Activated naive CD4-positive, alpha-beta T cell treated with anti-CD3 and anti-CD28 coated beads for 36 hours (primary cell): ENCODE measurements at regions of chr10 and their contacts with region 1.

Region 1: GRCh38 chr10:24866604-24867583 is 85.5 kb downstream of the PRTFDC1 start:
- DNase-seq: no peak
- H3K4me3 Mint-ChIP-seq: no peak overlapping the region
- H3K27ac Mint-ChIP-seq: no peak overlapping the region
- H3K4me1 Mint-ChIP-seq: peaks cover 30% of the 10 kb centered on the region
- H3K27me3 Mint-ChIP-seq: no peaks in the 10 kb centered on the region

Region 2: GRCh38 chr10:24706479-24707118 is 160.3 kb before region 1 on chr10:
- CTCF ChIA-PET with region 1: no interaction called
- intact Hi-C with region 1: loop called (anchors 5 kb)
- DNase-seq: peak; percentile 58
- H3K4me3 Mint-ChIP-seq: no peak overlapping the region
- H3K27ac Mint-ChIP-seq: no peak overlapping the region
- H3K4me1 Mint-ChIP-seq: peaks cover 5% of the 10 kb centered on the region
- H3K27me3 Mint-ChIP-seq: peaks cover 2% of the 10 kb centered on the region

Region 3: DNA sequence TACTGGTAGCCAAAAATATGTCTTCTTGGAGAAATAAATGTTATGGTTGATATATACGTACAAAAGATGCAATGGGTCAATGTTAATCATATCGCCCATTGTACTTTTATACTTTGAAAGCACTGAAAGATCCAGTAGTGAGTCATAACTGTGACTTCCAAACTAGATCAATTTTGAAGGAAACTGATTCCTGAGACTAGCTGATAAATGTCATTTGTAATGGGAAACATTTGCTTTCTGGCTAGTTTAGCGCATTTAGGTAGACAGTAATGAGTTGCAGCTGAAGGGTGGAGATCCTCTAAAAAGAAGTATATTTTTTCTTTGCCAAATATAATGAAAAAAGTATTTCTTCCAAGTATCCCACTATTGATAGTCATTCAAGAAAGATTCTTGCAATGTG is 89.7 kb before region 1 on chr10:
- CTCF ChIA-PET with region 1: no interaction called
- intact Hi-C with region 1: loop called (anchors 5 kb)
- DNase-seq: no peak
- H3K4me3 Mint-ChIP-seq: no peak overlapping the region
- H3K27ac Mint-ChIP-seq: no peak overlapping the region
- H3K4me1 Mint-ChIP-seq: peaks cover 14% of the 10 kb centered on the region
- H3K27me3 Mint-ChIP-seq: no peaks in the 10 kb centered on the region

Region 4: GRCh38 chr10:24822590-24822989 is 44.3 kb before region 1 on chr10:
- CTCF ChIA-PET with region 1: no interaction called
- intact Hi-C with region 1: loop called (anchors 2 kb)
- DNase-seq: peak; percentile 35
- H3K4me3 Mint-ChIP-seq: no peak overlapping the region
- H3K27ac Mint-ChIP-seq: no peak overlapping the region
- H3K4me1 Mint-ChIP-seq: peaks cover 45% of the 10 kb centered on the region
- H3K27me3 Mint-ChIP-seq: no peaks in the 10 kb centered on the region

Region 5: GRCh38 chr10:24882047-24882698 is 15.3 kb after region 1 on chr10:
- CTCF ChIA-PET with region 1: interaction called, 6 read pairs
- intact Hi-C with region 1: loop called (anchors 2 kb)
- DNase-seq: peak; percentile 71
- H3K4me3 Mint-ChIP-seq: peak overlapping the region; percentile 13
- H3K27ac Mint-ChIP-seq: no peak overlapping the region
- H3K4me1 Mint-ChIP-seq: peaks cover 44% of the 10 kb centered on the region
- H3K27me3 Mint-ChIP-seq: no peaks in the 10 kb centered on the region

Region 6: GRCh38 chr10:24901686-24902399 is 34.9 kb after region 1 on chr10:
- CTCF ChIA-PET with region 1: no interaction called
- intact Hi-C with region 1: loop called (anchors 1 kb)
- DNase-seq: peak; percentile 37
- H3K4me3 Mint-ChIP-seq: no peak overlapping the region
- H3K27ac Mint-ChIP-seq: no peak overlapping the region
- H3K4me1 Mint-ChIP-seq: peaks cover 33% of the 10 kb centered on the region
- H3K27me3 Mint-ChIP-seq: peaks cover 2% of the 10 kb centered on the region

Region 7: GRCh38 chr10:24920907-24921881 is 54.3 kb after region 1 on chr10:
- CTCF ChIA-PET with region 1: no interaction called
- intact Hi-C with region 1: loop called (anchors 2 kb)
- DNase-seq: peak; percentile 83
- H3K4me3 Mint-ChIP-seq: no peak overlapping the region
- H3K27ac Mint-ChIP-seq: peak overlapping the region; percentile 54
- H3K4me1 Mint-ChIP-seq: peaks cover 19% of the 10 kb centered on the region
- H3K27me3 Mint-ChIP-seq: no peaks in the 10 kb centered on the region